Activated T-helper 2 cell treated with anti-CD3 and anti-CD28 coated beads, Interferon-gamma antibody, Interleukin-2, Interleukin-4, amounts not matched to agents 10 μg/mL and 5 μg/mL and 100 μg/mL, durations not matched to agents 14 hours and 24 hours and 36 hours (primary cell): ENCODE measurements at regions of chr10 and their contacts with region 1.

Region 1: GRCh38 chr10:22436884-22437619 is 91.8 kb downstream of the SPAG6 start:
- DNase-seq: peak; percentile 82
- H3K4me3 Mint-ChIP-seq: peak overlapping the region; percentile 89
- H3K27ac Mint-ChIP-seq: peak overlapping the region; percentile 93
- H3K4me1 Mint-ChIP-seq: peaks cover 41% of the 10 kb centered on the region
- H3K27me3 Mint-ChIP-seq: peaks cover 9% of the 10 kb centered on the region

Region 2: GRCh38 chr10:21525367-21526183 is 911.5 kb before region 1 on chr10 and contains the start of gene SKIDA1:
- intact Hi-C with region 1: loop called (anchors 5 kb)
- DNase-seq: peak; percentile 44
- H3K4me3 Mint-ChIP-seq: peak within 1 kb of the TSS; percentile 83
- H3K27ac Mint-ChIP-seq: peak within 1 kb of the TSS; percentile 90
- H3K4me1 Mint-ChIP-seq: peaks cover 29% of the 10 kb centered on the region
- H3K27me3 Mint-ChIP-seq: peaks cover 50% of the 10 kb centered on the region
- total RNA-seq, gene SKIDA1: 0.11 TPM in 2 replicates

Region 3: DNA sequence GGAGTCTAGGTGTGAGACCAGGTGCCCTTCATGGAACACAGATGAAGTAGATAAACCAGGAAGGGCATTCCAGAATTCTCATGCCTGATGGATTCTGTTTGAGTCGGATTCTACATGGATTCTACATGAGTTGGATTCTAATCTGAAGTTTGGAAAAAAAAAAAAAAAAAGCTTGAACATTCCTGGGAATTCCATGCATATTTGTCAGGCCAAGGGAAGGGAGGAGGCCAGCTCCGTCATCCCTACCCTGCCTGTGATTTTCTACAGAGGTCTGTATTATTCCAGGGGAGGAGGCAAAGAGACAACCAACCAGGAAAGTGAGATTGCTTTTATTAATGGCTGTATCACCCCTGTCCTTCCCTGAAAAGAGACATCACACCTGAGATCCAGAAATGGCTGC is 191.5 kb before region 1 on chr10:
- intact Hi-C with region 1: loop called (anchors 2 kb)
- DNase-seq: no peak
- H3K4me3 Mint-ChIP-seq: no peak overlapping the region
- H3K27ac Mint-ChIP-seq: peak overlapping the region; percentile 59
- H3K4me1 Mint-ChIP-seq: peaks cover 42% of the 10 kb centered on the region
- H3K27me3 Mint-ChIP-seq: peaks cover 3% of the 10 kb centered on the region

Region 4: DNA sequence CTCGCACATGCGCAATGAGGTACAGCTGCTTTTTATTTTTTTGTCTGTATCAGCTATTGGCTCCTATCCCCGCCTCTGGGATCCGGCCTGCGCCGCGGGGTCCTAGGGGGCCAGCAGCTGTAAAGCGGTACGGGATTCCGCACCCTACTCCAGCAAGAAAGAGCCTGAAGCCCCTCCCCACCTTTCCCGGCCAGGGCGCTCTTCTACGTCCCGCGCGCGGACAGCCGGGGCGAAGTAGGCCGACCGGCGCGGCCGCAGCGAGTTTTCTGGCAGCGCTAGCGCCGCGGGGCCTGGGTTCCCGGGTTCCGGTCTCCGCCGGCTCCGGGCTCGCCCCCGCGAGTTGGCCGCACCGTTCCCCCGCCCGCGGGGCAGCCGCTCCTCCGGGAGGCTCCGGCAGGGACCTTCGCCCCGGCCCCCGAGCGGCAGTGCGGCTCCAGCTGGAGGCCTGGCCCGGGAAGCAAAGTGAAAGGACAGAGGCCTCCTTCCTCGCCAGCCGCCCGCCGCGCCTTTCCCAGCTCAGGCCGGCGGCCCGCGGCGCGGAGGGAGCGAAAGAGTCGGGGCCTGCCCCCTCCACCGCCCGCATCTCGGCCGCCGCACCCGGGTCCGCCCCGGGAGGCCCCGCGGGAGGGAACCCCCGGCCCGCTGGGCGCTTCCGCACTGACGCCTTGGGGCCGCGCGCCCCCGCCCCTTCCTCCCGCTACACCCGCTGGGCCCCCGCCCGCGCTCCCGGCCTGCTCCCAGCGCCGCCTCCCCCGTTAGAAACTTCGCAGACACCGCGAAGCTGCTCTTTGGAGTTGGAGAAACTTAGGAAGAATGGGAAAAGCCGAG is 96.5 kb before region 1 on chr10:
- intact Hi-C with region 1: loop called (anchors 1 kb)
- DNase-seq: peak; percentile 69
- H3K4me3 Mint-ChIP-seq: peak overlapping the region; percentile 85
- H3K27ac Mint-ChIP-seq: peak overlapping the region; percentile 90
- H3K4me1 Mint-ChIP-seq: peaks cover 45% of the 10 kb centered on the region
- H3K27me3 Mint-ChIP-seq: peaks cover 70% of the 10 kb centered on the region

Region 5: GRCh38 chr10:22475651-22476600 is 38.9 kb after region 1 on chr10:
- intact Hi-C with region 1: loop called (anchors 5 kb)
- DNase-seq: no peak
- H3K4me3 Mint-ChIP-seq: peak overlapping the region; percentile 83
- H3K27ac Mint-ChIP-seq: peak overlapping the region; percentile 28
- H3K4me1 Mint-ChIP-seq: peaks cover 6% of the 10 kb centered on the region
- H3K27me3 Mint-ChIP-seq: peaks cover 57% of the 10 kb centered on the region

Region 6: DNA sequence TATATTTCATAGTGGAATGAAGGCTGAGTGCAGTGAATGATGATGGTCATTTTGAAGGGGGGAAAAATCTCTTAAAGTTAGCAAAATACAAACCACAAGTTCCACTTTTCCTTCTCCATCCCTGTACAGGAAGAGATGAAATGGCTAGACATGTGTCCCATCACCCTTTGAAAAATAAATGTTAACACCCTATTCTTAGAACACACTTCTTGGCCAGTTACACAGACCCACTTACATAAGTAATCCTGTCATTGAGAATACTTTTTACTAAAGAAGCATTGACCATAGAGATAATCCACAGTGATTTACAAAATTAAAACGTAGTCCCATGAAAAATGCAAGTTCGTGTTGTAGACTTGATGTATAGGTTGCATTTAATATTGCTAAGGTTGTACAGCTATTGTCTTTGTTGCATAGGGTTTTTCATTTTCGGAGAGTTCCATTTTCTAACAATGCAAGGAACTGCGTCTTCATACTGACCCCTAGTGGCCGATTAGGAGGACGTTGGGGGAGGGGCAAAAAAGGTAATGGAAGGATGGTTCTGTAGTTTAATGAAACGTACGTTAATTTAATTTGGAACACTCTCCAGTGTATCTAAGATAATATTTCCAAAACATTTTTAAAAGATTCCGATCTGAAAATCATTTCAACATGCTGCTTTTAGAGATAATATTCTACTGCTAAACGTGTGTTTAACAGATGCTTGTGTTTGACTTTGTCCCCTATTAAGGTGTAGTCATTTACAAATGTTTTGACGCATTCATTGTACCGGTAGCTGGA is 551.7 kb after region 1 on chr10:
- intact Hi-C with region 1: loop called (anchors 5 kb)
- DNase-seq: peak; percentile 47
- H3K4me3 Mint-ChIP-seq: no peak overlapping the region
- H3K27ac Mint-ChIP-seq: no peak overlapping the region
- H3K4me1 Mint-ChIP-seq: peaks cover 14% of the 10 kb centered on the region
- H3K27me3 Mint-ChIP-seq: peaks cover 16% of the 10 kb centered on the region